Right ventricle myocardium inferior (tissue), 1 donor: ENCODE measurements at regions of chr3 and their contacts with region 1.

Region 1: GRCh38 chr3:127697551-127698240 is 24.9 kb downstream of the ABTB1 start:
- DNase-seq: peak; percentile 94
- ATAC-seq: peak; percentile 68

Region 2: GRCh38 chr3:127747723-127748521 is 50.2 kb after region 1 on chr3:
- intact Hi-C with region 1: loop called (anchors 2 kb)
- DNase-seq: peak; percentile 82
- ATAC-seq: peak; percentile 82

Region 3: GRCh38 chr3:127817396-127817841 is 119.7 kb after region 1 on chr3:
- intact Hi-C with region 1: loop called (anchors 2 kb)
- DNase-seq: no peak
- ATAC-seq: peak; percentile 25